A549 (cell line): ENCODE measurements at regions of chr13 and their contacts with region 1.

Region 1: GRCh38 chr13:94435604-94436226 is 43.8 kb downstream of the DCT start:
- DNase-seq: peak; percentile 26 to 37
- ATAC-seq: peak in 1 of 2 experiments; percentile 73; a peak in 4 of 6 replicates
- H3K4me3 ChIP-seq: no peak overlapping the region
- H3K27ac ChIP-seq: no peak overlapping the region
- H3K4me1 ChIP-seq: no peaks in the 10 kb centered on the region
- CTCF ChIP-seq: peak; percentile 62
- EP300 ChIP-seq: no peak
- POLR2A ChIP-seq: no peak
- RAD21 ChIP-seq: peak; percentile 63 to 71

Region 2: DNA sequence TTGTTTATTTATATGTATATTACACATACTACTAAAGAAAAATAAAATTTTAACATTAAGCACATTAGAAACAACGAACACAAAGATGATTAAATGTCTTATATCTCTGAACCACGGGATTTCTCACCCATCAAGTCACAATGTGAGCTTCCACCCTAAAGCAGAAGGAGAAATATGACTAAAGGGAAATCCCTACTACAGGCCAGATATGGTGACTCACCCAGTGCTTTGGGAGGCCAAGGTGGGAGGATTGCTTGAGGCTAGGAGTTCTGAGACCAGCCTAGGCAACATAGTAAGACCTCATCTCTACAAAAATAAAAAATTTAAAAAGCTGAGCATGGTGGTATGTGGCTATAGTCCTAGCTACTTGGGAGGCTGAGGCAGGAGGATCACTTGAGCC is 19.2 kb after region 1 on chr13:
- CTCF ChIA-PET with region 1: interaction called, 18 read pairs
- POLR2A ChIA-PET with region 1: no interaction called
- DNase-seq: no peak
- ATAC-seq: no peak
- H3K4me3 ChIP-seq: no peak overlapping the region
- H3K27ac ChIP-seq: no peak overlapping the region
- H3K4me1 ChIP-seq: no peaks in the 10 kb centered on the region
- CTCF ChIP-seq: no peak
- EP300 ChIP-seq: no peak
- POLR2A ChIP-seq: no peak
- RAD21 ChIP-seq: no peak

Region 3: GRCh38 chr13:94620286-94620896 is 184.7 kb after region 1 on chr13:
- CTCF ChIA-PET with region 1: interaction called, 61 read pairs
- POLR2A ChIA-PET with region 1: no interaction called
- DNase-seq: peak; percentile 13 to 45
- ATAC-seq: peak; percentile 70 to 81; a peak in 4 of 6 replicates
- H3K4me3 ChIP-seq: no peak overlapping the region
- H3K27ac ChIP-seq: no peak overlapping the region
- H3K4me1 ChIP-seq: no peaks in the 10 kb centered on the region
- CTCF ChIP-seq: peak; percentile 59
- EP300 ChIP-seq: no peak
- POLR2A ChIP-seq: no peak
- RAD21 ChIP-seq: peak; percentile 59 to 68; a peak in 4 of 5 replicates

Region 4: GRCh38 chr13:94705081-94705751 is 269.5 kb after region 1 on chr13:
- CTCF ChIA-PET with region 1: no interaction called
- POLR2A ChIA-PET with region 1: no interaction called
- DNase-seq: no peak
- ATAC-seq: no peak
- H3K4me3 ChIP-seq: no peak overlapping the region
- H3K27ac ChIP-seq: no peak overlapping the region
- H3K4me1 ChIP-seq: no peaks in the 10 kb centered on the region
- CTCF ChIP-seq: no peak
- EP300 ChIP-seq: no peak
- POLR2A ChIP-seq: no peak
- RAD21 ChIP-seq: no peak